B cell (primary cell): ENCODE measurements at regions of chr10 and their contacts with region 1.

Region 1: DNA sequence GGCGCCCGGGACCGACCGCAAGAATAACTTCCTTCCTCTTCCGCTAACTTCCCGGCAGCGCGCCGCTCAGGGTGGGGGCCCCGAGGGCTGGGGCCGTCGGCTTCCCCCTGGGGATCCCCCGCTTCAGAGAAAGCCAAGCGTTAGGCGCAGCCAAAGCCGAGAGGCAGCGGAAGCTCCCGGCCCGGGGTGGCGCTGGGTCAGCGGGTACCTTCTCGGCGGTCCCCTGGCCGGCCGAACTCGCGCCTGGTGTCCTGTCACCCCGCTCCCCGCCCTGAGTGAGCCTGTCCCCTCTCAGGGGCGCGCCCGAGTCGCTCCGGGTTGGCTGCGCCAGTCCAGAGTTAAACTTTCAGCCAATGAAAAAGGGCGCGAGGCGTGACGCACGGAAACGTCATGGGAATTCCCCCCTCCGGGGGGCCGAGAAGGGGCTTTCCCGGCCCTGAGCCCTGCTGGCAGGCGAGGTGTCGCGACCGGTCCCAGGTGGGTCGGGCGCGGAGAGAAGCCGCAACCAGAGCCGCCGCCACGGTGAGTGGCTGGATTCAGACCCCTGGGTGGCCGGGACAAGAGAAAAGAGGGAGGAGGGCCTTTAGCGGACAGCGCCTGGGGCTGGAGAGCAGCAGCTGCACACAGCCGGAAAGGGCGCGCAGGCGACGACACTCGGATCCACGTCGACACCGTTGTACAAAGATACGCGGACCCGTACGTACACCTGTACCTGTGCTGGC is 1.3 kb upstream of the NFKB2 start:
- DNase-seq: peak; percentile 100
- ATAC-seq: peak; percentile 76
- H3K4me3 ChIP-seq: peak overlapping the region; percentile 86 to 100 (median 99)
- H3K4me3 Mint-ChIP-seq: peak overlapping the region; percentile 95
- H3K27ac ChIP-seq: peak overlapping the region; percentile 98 to 100
- H3K27ac Mint-ChIP-seq: peak overlapping the region; percentile 99
- H3K4me1 ChIP-seq: peaks cover 35 to 44% of the 10 kb centered on the region in 2 donors
- H3K4me1 Mint-ChIP-seq: peaks cover 41% of the 10 kb centered on the region
- H3K27me3 ChIP-seq: no peaks in the 10 kb centered on the region
- H3K27me3 Mint-ChIP-seq: no peaks in the 10 kb centered on the region
- CTCF ChIP-seq: peak; percentile 38

Region 2: DNA sequence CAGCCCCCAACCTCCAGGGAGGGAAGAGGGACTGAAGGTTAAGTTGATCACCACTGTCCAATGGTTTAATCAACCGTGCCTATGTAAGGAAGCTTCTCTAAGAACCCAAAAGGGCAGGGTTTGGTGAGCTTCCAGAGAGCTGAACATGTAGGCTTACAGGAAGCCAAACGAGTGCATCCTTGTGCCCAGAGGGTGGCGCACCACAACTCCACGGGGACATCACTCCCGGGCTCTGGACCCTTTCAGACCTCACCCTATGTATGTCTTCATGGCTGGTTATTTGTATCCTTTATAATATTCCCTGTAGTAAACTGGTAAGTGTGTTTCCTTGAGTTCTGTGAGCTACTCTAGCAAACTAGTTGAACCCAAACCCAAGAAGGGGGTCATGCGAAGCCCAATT is 10.2 kb before region 1 on chr10:
- CTCF ChIA-PET with region 1: interaction called, 29 read pairs
- POLR2A ChIA-PET with region 1: interaction called, 3 read pairs
- intact Hi-C with region 1: no loop called
- DNase-seq: no peak
- ATAC-seq: no peak
- H3K4me3 ChIP-seq: no peak overlapping the region
- H3K4me3 Mint-ChIP-seq: no peak overlapping the region
- H3K27ac ChIP-seq: no peak overlapping the region
- H3K27ac Mint-ChIP-seq: no peak overlapping the region
- H3K4me1 ChIP-seq: peaks cover 0 to 8% of the 10 kb centered on the region in 2 donors
- H3K4me1 Mint-ChIP-seq: peaks cover 12% of the 10 kb centered on the region
- H3K27me3 ChIP-seq: no peaks in the 10 kb centered on the region
- H3K27me3 Mint-ChIP-seq: no peaks in the 10 kb centered on the region
- CTCF ChIP-seq: no peak

Region 3: GRCh38 chr10:102450194-102450938 is 56.1 kb after region 1 on chr10:
- CTCF ChIA-PET with region 1: interaction called, 32 read pairs
- POLR2A ChIA-PET with region 1: interaction called, 31 read pairs
- intact Hi-C with region 1: loop called (anchors 1 kb)
- DNase-seq: peak; percentile 96
- ATAC-seq: peak; percentile 79
- H3K4me3 ChIP-seq: peak overlapping the region; percentile 75 to 97 (median 87)
- H3K4me3 Mint-ChIP-seq: peak overlapping the region; percentile 97
- H3K27ac ChIP-seq: peak overlapping the region; percentile 81 to 86
- H3K27ac Mint-ChIP-seq: peak overlapping the region; percentile 97
- H3K4me1 ChIP-seq: peaks cover 12 to 15% of the 10 kb centered on the region in 2 donors
- H3K4me1 Mint-ChIP-seq: peaks cover 19% of the 10 kb centered on the region
- H3K27me3 ChIP-seq: no peaks in the 10 kb centered on the region
- H3K27me3 Mint-ChIP-seq: no peaks in the 10 kb centered on the region
- CTCF ChIP-seq: no peak

Region 4: DNA sequence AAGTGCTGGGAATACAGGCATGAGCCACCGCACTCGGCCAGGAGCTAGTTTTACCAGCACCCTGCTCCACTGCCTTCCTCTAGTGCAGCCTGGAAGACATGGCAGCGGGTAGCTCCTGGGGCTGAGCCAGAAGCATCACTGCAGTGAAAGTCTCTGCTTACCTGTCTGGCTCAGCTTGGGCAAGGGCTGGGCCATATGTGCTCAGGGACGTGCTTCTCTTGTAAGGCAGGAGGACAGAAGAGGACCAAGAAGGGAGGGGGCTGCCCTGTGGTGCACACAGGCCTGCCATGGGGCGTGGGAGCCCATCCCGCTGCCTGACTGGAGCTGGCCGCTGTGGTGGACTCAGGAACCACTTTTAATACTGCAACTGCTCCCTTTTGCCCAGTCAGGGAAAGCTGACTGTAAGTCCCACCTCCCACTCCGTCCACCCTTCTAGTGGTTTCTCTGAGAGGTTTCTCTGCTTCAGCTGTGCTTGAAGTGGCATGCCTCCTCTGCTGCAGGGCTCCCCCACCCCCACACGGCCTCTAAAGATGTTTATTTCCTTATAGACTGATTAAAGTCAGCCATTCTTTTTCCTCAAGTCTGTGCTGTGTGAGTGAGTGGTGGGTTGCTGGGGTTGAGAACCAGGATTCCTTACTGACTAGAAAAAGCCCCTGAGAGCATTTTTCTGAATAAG is 82.4 kb after region 1 on chr10:
- CTCF ChIA-PET with region 1: interaction called, 25 read pairs
- POLR2A ChIA-PET with region 1: interaction called, 4 read pairs
- intact Hi-C with region 1: loop called (anchors 1 kb)
- DNase-seq: no peak
- ATAC-seq: no peak
- H3K4me3 ChIP-seq: no peak overlapping the region
- H3K4me3 Mint-ChIP-seq: no peak overlapping the region
- H3K27ac ChIP-seq: no peak overlapping the region
- H3K27ac Mint-ChIP-seq: no peak overlapping the region
- H3K4me1 ChIP-seq: peaks cover 0 to 7% of the 10 kb centered on the region in 2 donors
- H3K4me1 Mint-ChIP-seq: peaks cover 7% of the 10 kb centered on the region
- H3K27me3 ChIP-seq: no peaks in the 10 kb centered on the region
- H3K27me3 Mint-ChIP-seq: no peaks in the 10 kb centered on the region
- CTCF ChIP-seq: no peak

Region 5: GRCh38 chr10:102583435-102584417 is 189.5 kb after region 1 on chr10:
- CTCF ChIA-PET with region 1: interaction called, 27 read pairs
- POLR2A ChIA-PET with region 1: interaction called, 4 read pairs
- intact Hi-C with region 1: loop called (anchors 1 kb)
- DNase-seq: peak; percentile 85
- ATAC-seq: peak; percentile 96
- H3K4me3 ChIP-seq: no peak overlapping the region
- H3K4me3 Mint-ChIP-seq: no peak overlapping the region
- H3K27ac ChIP-seq: no peak overlapping the region
- H3K27ac Mint-ChIP-seq: no peak overlapping the region
- H3K4me1 ChIP-seq: no peaks in the 10 kb centered on the region
- H3K4me1 Mint-ChIP-seq: peaks cover 2% of the 10 kb centered on the region
- H3K27me3 ChIP-seq: no peaks in the 10 kb centered on the region
- H3K27me3 Mint-ChIP-seq: no peaks in the 10 kb centered on the region
- CTCF ChIP-seq: peak; percentile 90